PC-9 (cell line): ENCODE measurements at regions of chr9 and their contacts with region 1.

Region 1: DNA sequence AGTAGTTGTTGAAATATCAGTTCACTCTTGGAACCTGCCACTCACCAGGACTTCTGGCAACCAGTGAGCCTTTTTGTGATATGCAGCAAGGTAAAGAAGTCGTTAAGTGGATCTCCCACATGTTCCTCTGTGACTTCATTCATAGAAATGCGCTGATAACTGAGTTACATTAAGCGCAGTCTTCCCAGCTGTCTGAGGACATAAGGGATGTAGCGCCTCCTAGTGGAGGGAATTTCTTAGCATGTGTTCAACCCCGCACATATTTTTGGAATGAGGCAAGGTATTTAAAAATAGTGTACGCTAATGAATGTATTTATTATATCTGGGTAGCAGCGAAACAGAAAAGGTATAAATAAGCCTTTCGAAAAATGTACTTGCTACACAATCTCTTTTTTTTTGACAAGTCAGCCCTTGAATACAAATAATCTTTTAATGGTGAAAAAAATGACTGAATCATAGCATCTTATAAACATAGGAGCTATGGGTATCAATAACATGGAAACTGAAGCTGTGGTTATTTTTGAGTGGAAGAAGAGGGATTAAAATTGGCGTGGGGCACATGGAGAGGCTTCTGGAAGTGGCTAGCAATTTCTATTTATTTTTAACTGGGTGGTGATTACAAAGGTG is 38.0 kb downstream of the PALM2AKAP2 start:
- DNase-seq: peak; percentile 73 to 81
- H3K4me3 ChIP-seq: no peak overlapping the region
- H3K27ac ChIP-seq: peak overlapping the region; percentile 61; the same call in 1 of the 2 replicates
- H3K4me1 ChIP-seq: peaks cover 40% of the 10 kb centered on the region
- H3K27me3 ChIP-seq: no peaks in the 10 kb centered on the region
- CTCF ChIP-seq: peak; percentile 86

Region 2: GRCh38 chr9:109453210-109453842 is 364.6 kb before region 1 on chr9:
- CTCF ChIA-PET with region 1: no interaction called
- POLR2A ChIA-PET with region 1: no interaction called
- intact Hi-C with region 1: loop called (anchors 5 kb)
- DNase-seq: peak; percentile 85 to 97
- H3K4me3 ChIP-seq: 0 out of 2 replicates have a peak overlapping the region, but pooled peaks have one; percentile 9
- H3K27ac ChIP-seq: peak overlapping the region; percentile 97
- H3K4me1 ChIP-seq: peaks cover 38% of the 10 kb centered on the region
- H3K27me3 ChIP-seq: no peaks in the 10 kb centered on the region
- CTCF ChIP-seq: no peak

Region 3: GRCh38 chr9:109574068-109574882 is 243.7 kb before region 1 on chr9:
- CTCF ChIA-PET with region 1: interaction called, 3 read pairs
- POLR2A ChIA-PET with region 1: no interaction called
- intact Hi-C with region 1: loop called (anchors 1 kb)
- DNase-seq: peak in 1 of 2 experiments; percentile 45
- H3K4me3 ChIP-seq: no peak overlapping the region
- H3K27ac ChIP-seq: no peak overlapping the region
- H3K4me1 ChIP-seq: no peaks in the 10 kb centered on the region
- H3K27me3 ChIP-seq: no peaks in the 10 kb centered on the region
- CTCF ChIP-seq: peak; percentile 89

Region 4: GRCh38 chr9:109717342-109717741 is 100.6 kb before region 1 on chr9:
- CTCF ChIA-PET with region 1: no interaction called
- POLR2A ChIA-PET with region 1: no interaction called
- intact Hi-C with region 1: loop called (anchors 5 kb)
- DNase-seq: no peak
- H3K4me3 ChIP-seq: no peak overlapping the region
- H3K27ac ChIP-seq: peak overlapping the region; percentile 87
- H3K4me1 ChIP-seq: peaks cover 43% of the 10 kb centered on the region
- H3K27me3 ChIP-seq: no peaks in the 10 kb centered on the region
- CTCF ChIP-seq: no peak

Region 5: DNA sequence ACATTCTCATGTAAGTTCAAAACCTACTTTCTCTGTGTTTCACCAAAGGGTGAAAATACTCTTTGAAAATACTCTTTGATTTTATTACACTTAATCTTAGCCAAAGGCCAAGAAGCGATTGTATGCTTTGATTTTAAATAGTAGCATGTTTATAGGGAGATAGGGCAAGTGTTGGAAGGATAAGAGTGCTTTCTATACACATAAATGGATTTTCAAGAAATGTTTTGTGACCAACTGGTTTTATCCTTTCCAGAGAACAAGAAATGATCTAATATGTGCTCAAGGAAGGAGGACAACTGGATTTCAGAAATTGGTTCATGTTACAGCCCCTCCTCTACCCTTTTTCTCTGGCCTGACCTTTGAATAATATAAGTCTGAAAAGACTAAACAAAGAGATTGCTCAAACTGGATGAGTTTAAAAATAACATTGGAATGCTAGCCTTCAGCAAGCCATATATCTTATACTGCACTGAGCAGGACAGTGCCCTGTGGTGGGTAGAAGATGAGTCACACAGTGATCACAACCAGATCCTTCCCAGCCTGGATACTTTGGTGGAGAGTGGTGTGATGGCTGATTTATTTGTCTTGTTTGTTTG is 24.9 kb before region 1 on chr9:
- CTCF ChIA-PET with region 1: no interaction called
- POLR2A ChIA-PET with region 1: no interaction called
- intact Hi-C with region 1: loop called (anchors 2 kb)
- DNase-seq: peak; percentile 53 to 92
- H3K4me3 ChIP-seq: no peak overlapping the region; the same call in 1 of the 2 replicates
- H3K27ac ChIP-seq: peak overlapping the region; percentile 85
- H3K4me1 ChIP-seq: peaks cover 35% of the 10 kb centered on the region
- H3K27me3 ChIP-seq: no peaks in the 10 kb centered on the region
- CTCF ChIP-seq: no peak

Region 6: DNA sequence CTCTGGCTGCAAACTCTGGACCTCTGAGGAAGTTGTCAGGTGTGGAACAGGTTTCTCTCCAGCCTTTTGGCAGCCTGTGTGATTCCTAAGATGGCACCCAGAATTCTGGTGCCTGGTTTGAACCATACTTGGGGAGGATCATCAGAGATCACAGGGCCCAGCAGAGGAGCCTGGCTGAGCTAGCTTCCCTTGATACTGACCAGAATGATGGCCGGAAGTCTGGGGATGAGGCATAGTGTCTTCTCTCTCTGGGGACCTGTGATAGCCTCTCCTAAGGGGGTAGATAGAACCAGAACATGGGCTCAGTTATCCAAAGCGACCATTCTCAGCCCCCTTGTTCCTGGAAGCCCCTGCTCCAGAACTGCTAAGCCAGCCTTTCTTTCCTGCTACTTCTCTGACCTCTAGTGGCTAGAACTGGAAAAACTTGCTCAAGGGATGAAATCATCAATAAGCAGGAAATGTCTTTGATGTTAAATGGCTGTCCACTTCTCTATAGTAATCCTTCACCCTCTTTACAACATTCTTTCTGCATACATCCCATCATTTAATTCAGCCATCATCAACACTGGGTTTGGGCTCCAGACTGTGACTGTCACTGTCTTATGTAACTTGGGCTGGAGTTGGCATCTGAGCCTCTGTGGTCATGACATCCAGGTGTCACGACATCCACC is 334.9 kb after region 1 on chr9:
- CTCF ChIA-PET with region 1: no interaction called
- POLR2A ChIA-PET with region 1: no interaction called
- intact Hi-C with region 1: loop called (anchors 5 kb)
- DNase-seq: peak in 1 of 2 experiments; percentile 56
- H3K4me3 ChIP-seq: no peak overlapping the region
- H3K27ac ChIP-seq: 0 out of 2 replicates have a peak overlapping the region, but pooled peaks have one; percentile 22
- H3K4me1 ChIP-seq: peaks cover 8% of the 10 kb centered on the region
- H3K27me3 ChIP-seq: no peaks in the 10 kb centered on the region
- CTCF ChIP-seq: peak; percentile 91